PC-9 (cell line): ENCODE measurements at regions of chr22 and their contacts with region 1.

Region 1: GRCh38 chr22:35963237-35963810 is 65.3 kb downstream of the RBFOX2 start:
- DNase-seq: no peak
- H3K4me3 ChIP-seq: no peak overlapping the region
- H3K27ac ChIP-seq: no peak overlapping the region
- H3K4me1 ChIP-seq: no peaks in the 10 kb centered on the region
- H3K27me3 ChIP-seq: no peaks in the 10 kb centered on the region
- CTCF ChIP-seq: no peak

Region 2: DNA sequence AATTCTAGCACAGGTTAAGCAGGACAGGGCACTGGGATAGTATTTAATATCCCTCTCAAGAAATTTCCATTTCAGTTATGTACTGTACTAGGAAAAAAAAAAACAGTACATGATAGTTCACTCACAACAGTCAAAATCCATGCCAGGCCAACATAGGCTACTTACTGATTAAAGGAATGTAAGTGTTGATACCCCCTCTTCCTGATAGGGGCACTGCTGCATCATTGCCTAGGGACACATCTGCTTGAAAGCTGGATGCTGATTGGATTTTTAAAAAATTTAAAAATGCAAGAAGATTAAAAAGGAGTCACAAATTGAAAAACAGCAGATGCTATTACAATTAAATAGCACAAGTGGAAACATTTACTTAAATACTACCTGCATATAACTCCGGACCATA is 202.3 kb before region 1 on chr22:
- CTCF ChIA-PET with region 1: interaction called, 10 read pairs
- POLR2A ChIA-PET with region 1: no interaction called
- intact Hi-C with region 1: no loop called
- DNase-seq: no peak
- H3K4me3 ChIP-seq: no peak overlapping the region
- H3K27ac ChIP-seq: no peak overlapping the region
- H3K4me1 ChIP-seq: 0 out of 2 replicates have a peak, but pooled peaks cover 3% of the 10 kb centered on the region
- H3K27me3 ChIP-seq: no peaks in the 10 kb centered on the region
- CTCF ChIP-seq: peak; percentile 43; the same call in 1 of the 2 replicates

Region 3: DNA sequence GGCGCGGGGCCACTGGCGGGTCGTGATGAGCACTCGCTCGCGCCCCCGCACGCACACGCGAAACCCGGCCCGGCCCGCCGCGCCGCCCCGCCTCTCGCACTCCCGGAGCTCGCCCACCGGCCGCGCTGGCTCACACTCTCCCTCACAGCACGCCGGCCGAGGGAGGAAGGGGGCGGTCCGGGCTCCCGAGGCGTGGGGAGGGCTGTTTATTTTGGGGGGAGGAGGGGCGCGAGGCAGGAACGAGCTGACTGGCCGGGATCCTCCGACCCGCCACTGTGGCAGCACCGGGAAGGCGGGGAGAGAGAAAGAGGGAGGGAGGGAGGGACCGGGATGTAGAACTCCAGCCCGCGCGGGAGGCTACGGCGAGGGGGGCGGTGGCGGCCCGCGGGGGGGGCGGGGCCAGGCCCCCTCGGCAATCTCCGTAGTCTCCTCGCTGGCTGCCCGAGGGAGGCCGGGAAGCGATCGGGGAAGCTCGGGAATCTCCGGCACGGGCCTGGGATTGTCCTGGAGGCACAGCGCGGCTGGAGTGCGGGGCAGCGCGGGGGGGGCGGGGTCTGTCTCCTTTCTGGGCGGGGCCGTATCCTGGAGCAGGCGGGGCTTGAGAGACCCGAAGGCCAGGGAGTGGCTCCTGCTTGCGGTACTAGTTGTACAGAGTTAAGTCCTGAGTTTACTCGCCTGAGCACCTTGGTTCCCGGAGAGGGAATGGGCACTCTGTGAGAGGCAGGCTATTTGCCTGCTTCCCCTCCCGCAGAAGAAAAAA is 65.5 kb after region 1 on chr22 and contains the start of gene RBFOX2:
- CTCF ChIA-PET with region 1: no interaction called
- POLR2A ChIA-PET with region 1: interaction called, 11 read pairs
- intact Hi-C with region 1: no loop called
- DNase-seq: peak; percentile 91 to 99
- H3K4me3 ChIP-seq: peak within 1 kb of the TSS; percentile 74
- H3K27ac ChIP-seq: peak within 1 kb of the TSS; percentile 29
- H3K4me1 ChIP-seq: peaks cover 22% of the 10 kb centered on the region
- H3K27me3 ChIP-seq: no peaks in the 10 kb centered on the region
- CTCF ChIP-seq: no peak
- total RNA-seq, gene RBFOX2: 81.7 and 109 TPM in 2 replicates